ENCODE measurements at regions of chr13 and their contacts with region 1.

Region 1: GRCh38 chr13:49356223-49356622 is 87.6 kb downstream of the CAB39L start:
- DNase-seq: no peak
- H3K4me3 ChIP-seq: no peak overlapping the region
- H3K27ac ChIP-seq: peak overlapping the region; percentile 90 to 91
- H3K4me1 ChIP-seq: peaks cover 0 to 36% of the 10 kb centered on the region in 2 donors
- H3K27me3 ChIP-seq: no peaks in the 10 kb centered on the region
- CTCF ChIP-seq: no peak

Region 2: GRCh38 chr13:49110122-49110912 is 245.9 kb before region 1 on chr13:
- intact Hi-C with region 1: no loop called
- DNase-seq: peak; percentile 33 to 85
- H3K4me3 ChIP-seq: peak overlapping the region; percentile 54 to 67
- H3K27ac ChIP-seq: no peak overlapping the region
- H3K4me1 ChIP-seq: peaks cover 0 to 13% of the 10 kb centered on the region in 2 donors
- H3K27me3 ChIP-seq: no peaks in the 10 kb centered on the region
- CTCF ChIP-seq: no peak

Region 3: GRCh38 chr13:49314344-49314882 is 41.8 kb before region 1 on chr13:
- intact Hi-C with region 1: loop called (anchors 2 kb)
- DNase-seq: no peak
- H3K4me3 ChIP-seq: peak overlapping the region in 1 of 2 donors; percentile 13
- H3K27ac ChIP-seq: peak overlapping the region; percentile 87 to 91
- H3K4me1 ChIP-seq: peaks cover 9 to 28% of the 10 kb centered on the region in 2 donors
- H3K27me3 ChIP-seq: no peaks in the 10 kb centered on the region
- CTCF ChIP-seq: no peak

Region 4: GRCh38 chr13:49395451-49395865 is 39.2 kb after region 1 on chr13:
- intact Hi-C with region 1: loop called (anchors 2 kb)
- DNase-seq: peak in 1 of 2 donors; percentile 79
- H3K4me3 ChIP-seq: no peak overlapping the region
- H3K27ac ChIP-seq: peak overlapping the region; percentile 74 to 83
- H3K4me1 ChIP-seq: peaks cover 0 to 5% of the 10 kb centered on the region in 2 donors
- H3K27me3 ChIP-seq: no peaks in the 10 kb centered on the region
- CTCF ChIP-seq: no peak

Region 5: DNA sequence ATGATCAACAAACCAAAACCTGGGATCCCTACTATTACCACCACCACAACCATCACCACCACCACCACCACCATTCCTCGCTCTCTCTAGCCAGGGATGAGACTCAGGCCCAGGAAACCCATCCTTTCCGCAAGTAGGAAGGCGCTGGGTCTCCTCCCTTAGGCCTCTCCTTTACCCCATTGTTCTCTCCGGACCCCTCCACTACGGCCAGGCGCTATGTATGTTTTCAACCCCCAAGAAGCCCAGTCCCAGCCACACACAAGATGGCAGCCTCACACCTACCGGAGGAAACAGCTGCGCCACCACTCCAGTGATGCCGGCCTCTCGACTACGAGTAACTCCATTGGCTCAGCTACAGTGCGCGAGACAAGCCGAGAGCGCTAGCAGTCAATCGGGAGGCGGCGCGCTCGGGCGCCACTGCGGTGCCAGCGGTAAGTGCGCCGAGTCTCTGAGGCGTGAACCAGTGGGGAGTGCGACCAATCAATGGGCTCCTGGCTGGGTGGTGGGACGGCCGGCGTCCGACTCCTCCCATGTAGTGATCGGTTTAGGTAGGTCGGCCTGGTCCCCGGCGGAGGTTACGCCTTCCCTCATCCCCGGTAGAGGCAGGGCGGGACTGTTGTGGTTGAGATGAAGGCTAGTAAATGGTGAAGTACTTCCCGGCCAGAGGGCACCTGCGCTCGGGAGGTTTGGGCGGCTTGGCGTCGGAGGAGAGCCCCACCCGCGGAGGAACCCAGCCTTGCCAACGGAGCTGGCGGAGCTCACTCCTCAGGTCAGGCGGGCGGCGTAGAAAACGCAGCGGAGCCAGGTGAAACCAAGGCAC is 87.7 kb after region 1 on chr13 and contains the starts of genes CAB39L and SETDB2:
- intact Hi-C with region 1: loop called (anchors 2 kb)
- DNase-seq: peak; percentile 99 to 100
- H3K4me3 ChIP-seq: peak within 1 kb of the TSS; percentile 75 to 84
- H3K27ac ChIP-seq: peak within 1 kb of the TSS; percentile 96 to 99
- H3K4me1 ChIP-seq: peaks cover 2 to 20% of the 10 kb centered on the region in 2 donors
- H3K27me3 ChIP-seq: no peaks in the 10 kb centered on the region
- CTCF ChIP-seq: peak; percentile 26 to 45 (median 42)
- total RNA-seq, gene CAB39L: 30.1 TPM
- total RNA-seq, gene SETDB2: 7.2 TPM